ENCODE measurements at regions of chr3 and their contacts with region 1.

Region 1: GRCh38 chr3:15815696-15816095 is 17.9 kb upstream of the ANKRD28 start:
- DNase-seq: no peak
- CTCF ChIP-seq: peak; percentile 51

Region 2: GRCh38 chr3:14959359-14959943 is 856.2 kb before region 1 on chr3:
- in situ Hi-C with region 1: no loop called
- DNase-seq: peak; percentile 37
- CTCF ChIP-seq: no peak

Region 3: DNA sequence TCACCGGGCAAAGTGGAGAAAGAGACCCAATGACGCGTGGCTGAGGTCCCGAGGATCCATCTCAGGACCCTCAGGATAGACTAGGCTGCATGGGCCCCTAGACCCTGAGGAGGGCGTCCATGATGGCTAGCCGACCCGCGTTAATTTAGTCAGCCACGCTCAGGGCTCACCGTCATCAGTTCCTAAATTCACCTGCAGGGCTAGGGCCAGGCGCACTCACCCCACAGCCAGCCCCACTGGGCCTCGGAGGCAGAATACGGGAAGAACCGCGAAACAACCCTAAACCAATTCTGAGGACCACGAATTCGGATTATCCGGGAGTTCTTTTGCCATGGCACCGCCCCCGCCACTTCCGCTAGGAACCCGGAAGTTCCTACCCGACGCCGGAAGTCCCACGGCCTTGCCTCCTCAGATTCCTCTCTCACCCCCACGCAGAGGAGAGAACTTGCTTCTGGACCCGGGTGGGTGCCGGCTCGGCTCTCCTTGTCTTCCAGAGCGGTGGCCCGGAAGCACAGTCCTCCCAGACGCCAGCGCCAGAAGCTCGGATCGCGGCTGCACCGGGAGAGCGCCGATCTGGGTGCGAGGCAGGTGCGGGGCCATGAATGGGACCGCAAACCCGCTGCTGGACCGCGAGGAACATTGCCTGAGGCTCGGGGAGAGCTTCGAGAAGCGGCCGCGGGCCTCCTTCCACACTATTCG is 388.4 kb before region 1 on chr3 and contains the starts of genes EAF1 and METTL6:
- in situ Hi-C with region 1: loop called (anchors 25 kb)
- DNase-seq: peak; percentile 87
- CTCF ChIP-seq: no peak